ENCODE measurements at regions of chr7 and their contacts with region 1.

Region 1: GRCh38 chr7:23558303-23558702 is 26.5 kb upstream of the TRA2A start:
- H3K4me3 ChIP-seq: no peak overlapping the region
- H3K27ac ChIP-seq: no peak overlapping the region
- H3K4me1 ChIP-seq: no peaks in the 10 kb centered on the region
- CTCF ChIP-seq: no peak

Region 2: GRCh38 chr7:23306936-23307521 is 251.3 kb before region 1 on chr7:
- CTCF ChIA-PET with region 1: no interaction called
- POLR2A ChIA-PET with region 1: no interaction called
- H3K4me3 ChIP-seq: no peak overlapping the region
- H3K27ac ChIP-seq: no peak overlapping the region
- H3K4me1 ChIP-seq: no peaks in the 10 kb centered on the region
- CTCF ChIP-seq: no peak

Region 3: GRCh38 chr7:23546897-23547572 is 11.3 kb before region 1 on chr7:
- CTCF ChIA-PET with region 1: interaction called, 14 read pairs
- POLR2A ChIA-PET with region 1: no interaction called
- H3K4me3 ChIP-seq: no peak overlapping the region
- H3K27ac ChIP-seq: no peak overlapping the region
- H3K4me1 ChIP-seq: no peaks in the 10 kb centered on the region; the same call in 1 of the 2 replicates
- CTCF ChIP-seq: peak; percentile 87